ENCODE measurements at regions of chr14 and their contacts with region 1.

Region 1: GRCh38 chr14:70887207-70887681 is 20.0 kb upstream of the PCNX1 start:
- DNase-seq: peak; percentile 41
- H3K4me3 Mint-ChIP-seq: peak overlapping the region; percentile 39
- H3K27ac Mint-ChIP-seq: peak overlapping the region; percentile 92
- H3K4me1 Mint-ChIP-seq: peaks cover 74% of the 10 kb centered on the region
- H3K27me3 Mint-ChIP-seq: peaks cover 2% of the 10 kb centered on the region

Region 2: DNA sequence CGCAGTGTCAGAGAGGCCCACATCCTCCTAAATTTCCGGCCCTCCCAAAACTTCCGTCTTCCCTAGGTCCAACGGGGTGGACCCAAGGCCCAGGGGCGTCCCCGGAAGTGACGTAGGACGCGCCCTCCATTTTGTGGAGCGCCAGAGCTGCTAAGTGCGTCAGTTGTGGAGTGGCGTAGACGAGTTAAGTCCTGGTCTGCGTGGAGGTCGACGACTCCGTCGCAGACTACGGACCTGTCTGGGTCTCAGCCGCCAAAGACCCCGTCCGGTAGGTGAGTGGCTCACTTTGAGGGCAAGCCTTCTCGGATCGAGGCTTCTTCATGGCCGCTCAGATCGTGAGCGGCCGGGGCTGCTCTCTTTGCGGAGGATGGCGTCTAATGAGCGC is 1120.3 kb before region 1 on chr14 and contains the start of gene SRSF5:
- CTCF ChIA-PET with region 1: no interaction called
- intact Hi-C with region 1: loop called (anchors 1 kb)
- DNase-seq: peak; percentile 95
- H3K4me3 Mint-ChIP-seq: peak within 1 kb of the TSS; percentile 97
- H3K27ac Mint-ChIP-seq: peak within 1 kb of the TSS; percentile 100
- H3K4me1 Mint-ChIP-seq: peaks cover 75% of the 10 kb centered on the region
- H3K27me3 Mint-ChIP-seq: no peaks in the 10 kb centered on the region
- total RNA-seq, gene SRSF5: 296 to 297 TPM

Region 3: GRCh38 chr14:70856851-70857495 is 30.3 kb before region 1 on chr14:
- CTCF ChIA-PET with region 1: interaction called, 3 read pairs
- intact Hi-C with region 1: loop called (anchors 2 kb)
- DNase-seq: peak; percentile 34
- H3K4me3 Mint-ChIP-seq: no peak overlapping the region
- H3K27ac Mint-ChIP-seq: no peak overlapping the region
- H3K4me1 Mint-ChIP-seq: peaks cover 8% of the 10 kb centered on the region
- H3K27me3 Mint-ChIP-seq: no peaks in the 10 kb centered on the region

Region 4: DNA sequence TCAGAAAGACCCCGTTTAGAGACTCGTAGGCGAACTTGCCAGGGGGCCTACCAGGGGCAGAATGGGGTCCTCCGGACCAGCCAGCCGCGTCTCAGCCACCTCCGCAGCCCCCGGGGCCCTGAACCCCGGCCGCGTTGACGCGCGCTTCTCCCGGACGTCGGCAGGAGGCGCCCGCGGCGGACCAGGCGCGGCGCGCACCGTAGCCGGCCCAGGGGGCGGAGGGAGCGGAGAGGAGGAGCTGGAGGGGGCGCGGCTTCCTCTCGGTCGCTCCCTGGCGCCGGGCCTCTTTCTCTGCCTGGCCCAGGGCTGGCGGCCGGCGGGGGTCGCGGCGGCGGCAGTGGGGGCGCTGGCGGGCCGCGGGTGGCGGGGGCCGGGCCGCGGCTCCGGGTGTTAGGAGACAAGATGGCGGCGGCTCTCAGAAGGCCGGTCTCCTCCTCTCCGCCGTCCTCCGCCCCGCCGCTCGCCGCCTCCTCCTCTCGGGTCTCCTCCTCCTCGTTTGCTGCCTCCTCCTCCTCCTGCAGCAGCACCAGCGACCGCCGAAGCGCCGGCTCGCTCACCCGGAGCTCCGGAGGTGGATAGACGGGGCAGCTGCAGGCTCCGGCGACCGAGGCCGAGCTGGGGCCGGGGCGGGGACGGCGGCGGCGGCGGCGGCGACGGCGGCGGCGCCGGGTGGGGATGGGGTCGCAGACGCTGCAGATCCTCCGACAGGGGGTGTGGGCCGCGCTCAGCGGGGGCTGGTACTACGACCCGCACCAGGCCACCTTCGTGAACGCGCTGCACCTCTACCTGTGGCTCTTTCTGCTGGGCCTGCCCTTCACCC is 20.1 kb after region 1 on chr14 and contains the start of gene PCNX1:
- CTCF ChIA-PET with region 1: interaction called, 84 read pairs
- intact Hi-C with region 1: loop called (anchors 1 kb)
- DNase-seq: peak; percentile 87
- H3K4me3 Mint-ChIP-seq: peak within 1 kb of the TSS; percentile 81
- H3K27ac Mint-ChIP-seq: peak within 1 kb of the TSS; percentile 91
- H3K4me1 Mint-ChIP-seq: peaks cover 74% of the 10 kb centered on the region
- H3K27me3 Mint-ChIP-seq: no peaks in the 10 kb centered on the region
- total RNA-seq, gene PCNX1: 51.9 to 63.1 TPM

Region 5: GRCh38 chr14:70955543-70956480 is 68.6 kb after region 1 on chr14:
- CTCF ChIA-PET with region 1: interaction called, 13 read pairs
- intact Hi-C with region 1: no loop called
- DNase-seq: peak; percentile 58
- H3K4me3 Mint-ChIP-seq: no peak overlapping the region
- H3K27ac Mint-ChIP-seq: no peak overlapping the region
- H3K4me1 Mint-ChIP-seq: peaks cover 33% of the 10 kb centered on the region
- H3K27me3 Mint-ChIP-seq: no peaks in the 10 kb centered on the region

Region 6: DNA sequence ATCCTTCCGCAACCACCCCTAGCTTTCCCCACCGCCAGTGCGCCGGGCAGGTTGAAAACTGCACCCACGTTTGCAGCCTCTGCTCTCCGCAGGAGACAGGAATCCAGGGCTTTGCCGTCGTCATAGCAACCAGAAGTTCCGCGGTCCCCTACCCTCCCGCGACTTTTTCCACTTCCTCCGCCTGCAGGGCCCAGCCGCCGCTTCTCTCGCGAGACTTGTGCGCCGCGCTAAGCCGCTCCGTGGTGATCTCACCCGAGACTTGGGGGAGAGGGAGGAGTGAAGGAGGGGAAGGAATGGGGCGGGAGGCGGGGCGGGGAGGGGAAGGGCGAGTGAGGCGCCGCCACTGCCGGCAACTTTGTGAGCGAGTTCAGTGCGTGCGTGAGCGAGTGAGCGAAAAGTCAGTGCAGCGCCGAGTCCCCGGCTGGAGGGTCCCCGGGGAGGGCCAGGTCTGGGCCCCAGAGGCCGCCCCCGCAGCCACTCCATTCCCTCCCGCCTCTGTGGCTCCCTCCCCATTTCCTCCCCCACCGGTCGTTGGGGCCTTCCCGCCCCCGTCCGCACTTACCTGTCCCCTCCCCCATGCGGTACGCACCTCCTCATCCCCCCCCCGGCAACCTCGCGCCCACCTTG is 433.0 kb after region 1 on chr14:
- CTCF ChIA-PET with region 1: no interaction called
- intact Hi-C with region 1: loop called (anchors 10 kb)
- DNase-seq: peak; percentile 99
- H3K4me3 Mint-ChIP-seq: peak within 1 kb of the TSS; percentile 83
- H3K27ac Mint-ChIP-seq: peak within 1 kb of the TSS; percentile 71
- H3K4me1 Mint-ChIP-seq: peaks cover 39% of the 10 kb centered on the region
- H3K27me3 Mint-ChIP-seq: no peaks in the 10 kb centered on the region